ENCODE measurements at regions of chr16 and their contacts with region 1.

Region 1: GRCh38 chr16:35319536-35320192 is 1860.3 kb downstream of the TP53TG3F start:
- DNase-seq: no peak
- H3K4me3 ChIP-seq: no peak overlapping the region
- H3K27ac ChIP-seq: no peak overlapping the region
- H3K4me1 ChIP-seq: no peaks in the 10 kb centered on the region
- H3K27me3 ChIP-seq: no peaks in the 10 kb centered on the region
- CTCF ChIP-seq: no peak

Region 2: GRCh38 chr16:35255186-35255803 is 64.4 kb before region 1 on chr16:
- intact Hi-C with region 1: loop called (anchors 10 kb)
- DNase-seq: no peak
- H3K4me3 ChIP-seq: no peak overlapping the region
- H3K27ac ChIP-seq: no peak overlapping the region
- H3K4me1 ChIP-seq: no peaks in the 10 kb centered on the region
- H3K27me3 ChIP-seq: no peaks in the 10 kb centered on the region
- CTCF ChIP-seq: no peak

Measured in kidney (tissue), 22 donors.